ENCODE measurements at regions of chr16 and their contacts with region 1.

Region 1: DNA sequence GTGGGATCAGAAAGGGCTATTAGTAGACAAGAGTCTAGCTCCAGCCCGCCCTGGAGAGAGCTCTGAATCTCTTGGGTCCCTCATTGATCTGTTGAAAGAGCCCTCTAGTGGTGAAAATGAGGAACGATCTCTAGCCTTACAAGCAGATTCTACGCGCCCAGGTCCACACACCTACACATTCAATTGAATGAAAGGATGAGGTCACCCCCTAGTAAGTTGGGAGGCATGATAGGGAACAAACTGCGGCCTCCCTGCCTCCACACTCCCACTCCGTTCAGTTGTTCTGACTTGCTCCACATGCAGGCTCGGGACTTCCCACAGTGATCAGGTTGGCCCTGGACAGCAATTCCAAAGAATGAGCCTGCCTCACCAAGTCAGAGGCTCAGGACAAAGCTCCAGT is 2.9 kb upstream of the CACNG3 start:
- DNase-seq: peak in 1 of 2 donors; percentile 10
- ATAC-seq: peak in 3 of 8 donors; percentile 47 to 66 (median 52)
- H3K4me3 ChIP-seq: no peak overlapping the region
- H3K27ac ChIP-seq: no peak overlapping the region
- H3K4me1 ChIP-seq: no peaks in the 10 kb centered on the region
- H3K27me3 ChIP-seq: peaks cover 0 to 65% (median 44%) of the 10 kb centered on the region in 7 donors
- CTCF ChIP-seq: peak; percentile 20 to 73 (median 67)

Region 2: DNA sequence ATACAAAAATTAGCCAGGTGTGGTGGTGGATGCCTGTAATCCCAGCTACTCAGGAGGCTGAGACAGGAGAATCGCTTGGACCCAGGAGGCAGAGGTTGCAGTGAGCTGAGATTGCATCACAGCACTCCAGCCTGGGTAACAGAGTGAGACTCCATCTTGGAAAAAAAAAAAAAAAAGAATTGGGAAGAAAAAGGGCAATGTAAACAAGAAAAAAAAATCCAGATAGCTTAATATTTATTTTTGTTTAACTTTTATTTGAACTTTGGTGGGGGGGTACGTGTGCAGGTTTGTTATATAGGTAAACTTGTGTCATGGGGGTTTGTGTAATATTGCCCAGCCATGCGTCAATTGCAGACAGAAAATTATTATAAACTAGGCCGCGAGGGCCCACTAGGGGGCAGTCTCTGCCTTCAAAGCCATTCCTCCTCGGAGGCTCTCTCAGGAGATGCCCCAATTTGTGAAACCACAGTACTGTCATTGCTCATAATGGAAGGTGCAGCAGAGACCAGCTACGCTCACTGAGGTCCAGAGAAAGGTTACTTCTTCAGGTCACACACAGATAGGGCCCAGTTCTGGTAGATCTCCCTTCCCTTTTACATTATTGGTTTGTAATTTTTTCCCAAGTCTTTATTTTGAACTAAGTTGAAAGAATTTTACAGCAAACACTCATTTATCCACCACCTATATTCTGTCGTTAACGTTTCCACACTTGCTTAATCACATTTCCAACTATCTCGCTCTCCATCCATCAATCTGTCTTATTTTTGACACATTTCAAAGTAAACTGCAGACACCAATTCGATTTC is 211.2 kb before region 1 on chr16:
- intact Hi-C with region 1: loop called in 7 of 10 experiments (anchors 2 to 10 kb)
- DNase-seq: peak; percentile 50 to 56
- ATAC-seq: peak in 3 of 8 donors; percentile 44 to 58 (median 54)
- H3K4me3 ChIP-seq: no peak overlapping the region
- H3K27ac ChIP-seq: no peak overlapping the region
- H3K4me1 ChIP-seq: no peaks in the 10 kb centered on the region
- H3K27me3 ChIP-seq: peaks cover 0 to 24% (median 0%) of the 10 kb centered on the region in 7 donors
- CTCF ChIP-seq: peak; percentile 49 to 79 (median 69)

Region 3: GRCh38 chr16:24070851-24071250 is 182.3 kb before region 1 on chr16:
- intact Hi-C with region 1: loop called (anchors 2 to 10 kb)
- DNase-seq: peak in 1 of 2 donors; percentile 6
- ATAC-seq: peak in 1 of 8 donors; percentile 53
- H3K4me3 ChIP-seq: no peak overlapping the region
- H3K27ac ChIP-seq: no peak overlapping the region
- H3K4me1 ChIP-seq: no peaks in the 10 kb centered on the region
- H3K27me3 ChIP-seq: peaks cover 0 to 10% (median 0%) of the 10 kb centered on the region in 7 donors
- CTCF ChIP-seq: peak; percentile 33 to 62 (median 60)

Region 4: GRCh38 chr16:24499193-24499814 is 246.1 kb after region 1 on chr16:
- intact Hi-C with region 1: loop called in 3 of 10 experiments (anchors 10 kb)
- DNase-seq: no peak
- ATAC-seq: peak in 2 of 8 donors; percentile 30 to 35
- H3K4me3 ChIP-seq: no peak overlapping the region
- H3K27ac ChIP-seq: no peak overlapping the region
- H3K4me1 ChIP-seq: no peaks in the 10 kb centered on the region
- H3K27me3 ChIP-seq: peaks cover 0 to 37% (median 24%) of the 10 kb centered on the region in 7 donors
- CTCF ChIP-seq: peak in 6 of 9 donors; percentile 30 to 46 (median 41)

Region 5: GRCh38 chr16:24504472-24505345 is 251.5 kb after region 1 on chr16:
- intact Hi-C with region 1: loop called in 3 of 10 experiments (anchors 10 kb)
- DNase-seq: peak; percentile 15 to 48
- ATAC-seq: peak; percentile 55 to 88 (median 71)
- H3K4me3 ChIP-seq: no peak overlapping the region
- H3K27ac ChIP-seq: no peak overlapping the region
- H3K4me1 ChIP-seq: no peaks in the 10 kb centered on the region
- H3K27me3 ChIP-seq: peaks cover 0 to 47% (median 37%) of the 10 kb centered on the region in 7 donors
- CTCF ChIP-seq: peak; percentile 62 to 82 (median 76)